CD4-positive, alpha-beta memory T cell (primary cell): ENCODE measurements at regions of chr2 and their contacts with region 1.

Region 1: DNA sequence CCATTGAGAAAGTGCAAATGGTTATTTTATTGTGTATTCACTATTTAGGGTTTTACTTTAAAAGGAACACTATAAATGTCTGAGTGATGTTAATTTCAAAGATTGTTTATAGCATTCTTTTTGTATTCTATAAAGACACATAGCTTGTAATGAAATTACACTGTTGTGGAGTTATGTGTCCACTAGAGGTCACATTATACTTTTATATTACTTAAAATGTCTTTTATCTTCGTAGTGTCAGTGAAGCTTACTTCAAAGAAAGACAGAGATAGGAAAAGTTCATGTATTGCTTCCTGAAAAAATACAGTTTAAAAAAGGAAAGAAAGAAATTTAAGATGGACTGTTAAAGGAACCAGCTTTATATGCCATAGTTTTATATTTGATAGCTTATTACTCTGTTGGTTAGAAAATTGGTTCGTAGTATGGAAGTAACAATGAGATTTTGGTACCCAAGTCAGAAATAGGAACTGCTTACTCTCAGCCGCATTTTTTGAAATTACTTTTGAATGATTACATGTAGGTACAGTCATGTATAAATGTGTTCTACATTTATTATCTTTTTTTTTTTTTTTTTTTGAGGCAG is 20.5 kb downstream of the APLF start:
- DNase-seq: peak in 4 of 5 donors; percentile 24 to 39 (median 31)
- H3K4me3 ChIP-seq: no peak overlapping the region
- H3K4me3 Mint-ChIP-seq: peak overlapping the region in 1 of 8 donors; percentile 28
- H3K27ac ChIP-seq: no peak overlapping the region
- H3K27ac Mint-ChIP-seq: peak overlapping the region in 2 of 7 donors; percentile 35 to 38
- H3K4me1 ChIP-seq: no peaks in the 10 kb centered on the region
- H3K4me1 Mint-ChIP-seq: peaks cover 0 to 5% (median 1%) of the 10 kb centered on the region in 4 donors
- H3K27me3 ChIP-seq: no peaks in the 10 kb centered on the region
- H3K27me3 Mint-ChIP-seq: no peaks in the 10 kb centered on the region

Region 2: DNA sequence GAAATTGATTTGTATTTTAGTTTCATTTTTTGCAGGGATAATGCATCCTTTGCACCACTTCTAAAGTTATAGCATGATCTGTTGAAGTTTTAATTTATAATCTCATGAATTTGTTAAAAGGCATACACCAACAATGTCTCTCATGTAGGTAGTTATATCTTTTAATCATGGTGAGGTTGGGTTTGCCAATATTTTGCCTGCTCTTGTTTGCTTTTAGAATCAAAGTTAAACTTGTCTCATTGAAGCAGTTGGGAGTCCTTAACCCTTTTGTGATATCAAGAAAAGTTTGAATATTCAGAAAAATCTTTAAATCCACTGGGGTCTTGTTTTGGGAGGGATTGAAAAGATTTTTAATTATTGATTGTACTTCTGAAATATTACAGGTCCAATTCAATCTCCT is 11.3 kb after region 1 on chr2:
- CTCF ChIA-PET with region 1: interaction called, 10 read pairs
- POLR2A ChIA-PET with region 1: no interaction called
- intact Hi-C with region 1: no loop called
- DNase-seq: no peak
- H3K4me3 ChIP-seq: no peak overlapping the region
- H3K4me3 Mint-ChIP-seq: no peak overlapping the region
- H3K27ac ChIP-seq: no peak overlapping the region
- H3K27ac Mint-ChIP-seq: no peak overlapping the region
- H3K4me1 ChIP-seq: no peaks in the 10 kb centered on the region
- H3K4me1 Mint-ChIP-seq: peaks cover 0 to 4% (median 0%) of the 10 kb centered on the region in 4 donors
- H3K27me3 ChIP-seq: no peaks in the 10 kb centered on the region
- H3K27me3 Mint-ChIP-seq: no peaks in the 10 kb centered on the region

Region 3: DNA sequence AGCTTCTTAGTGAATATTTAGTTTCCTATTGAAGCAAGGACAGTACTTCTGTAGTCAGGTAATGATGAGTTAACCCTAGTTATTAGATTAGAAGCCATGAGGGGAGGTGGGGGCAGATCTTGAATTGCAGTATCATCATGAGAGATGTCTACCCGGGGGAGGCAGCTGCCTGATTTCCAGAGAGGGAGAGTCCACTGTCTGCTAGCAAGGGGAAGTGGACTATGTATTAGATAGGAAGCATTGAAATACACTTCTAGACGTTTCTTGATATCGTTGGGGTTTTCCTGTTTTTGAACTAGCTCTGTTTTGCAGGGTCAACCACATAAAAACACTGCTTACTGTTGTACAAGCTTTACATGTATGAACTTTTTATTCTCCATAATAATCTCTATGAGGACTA is 18.3 kb after region 1 on chr2:
- CTCF ChIA-PET with region 1: interaction called, 21 read pairs
- POLR2A ChIA-PET with region 1: interaction called, 7 read pairs
- intact Hi-C with region 1: no loop called
- DNase-seq: peak in 2 of 5 donors; percentile 13 to 22
- H3K4me3 ChIP-seq: peak overlapping the region in 1 of 2 donors; percentile 17
- H3K4me3 Mint-ChIP-seq: peak overlapping the region; percentile 4 to 80 (median 64)
- H3K27ac ChIP-seq: no peak overlapping the region
- H3K27ac Mint-ChIP-seq: peak overlapping the region; percentile 25 to 87 (median 74)
- H3K4me1 ChIP-seq: peaks cover 27% of the 10 kb centered on the region
- H3K4me1 Mint-ChIP-seq: peaks cover 17 to 27% (median 22%) of the 10 kb centered on the region in 4 donors
- H3K27me3 ChIP-seq: no peaks in the 10 kb centered on the region
- H3K27me3 Mint-ChIP-seq: no peaks in the 10 kb centered on the region